MCF 10A (cell line): ENCODE measurements at regions of chr22 and their contacts with region 1.

Region 1: DNA sequence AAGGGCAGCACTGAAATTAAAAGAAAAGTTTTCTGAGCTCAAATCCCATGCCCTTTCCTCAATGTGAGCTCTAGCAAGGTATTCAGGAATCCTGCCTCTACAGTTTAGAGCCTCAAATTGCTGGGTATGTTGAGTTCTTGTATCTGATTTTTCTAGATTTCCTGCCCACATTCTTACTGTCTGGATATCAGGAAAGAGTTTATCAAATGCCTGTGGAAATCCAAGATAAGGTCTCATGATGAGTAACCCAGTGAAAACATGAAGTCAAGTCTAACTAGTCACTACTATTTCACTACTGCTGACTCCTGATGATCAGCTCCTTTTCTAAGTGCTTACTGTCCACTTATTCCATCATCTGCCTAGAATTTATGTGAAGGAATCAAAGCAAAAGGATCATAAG is 29.8 kb downstream of the LIMK2 start:
- DNase-seq: no peak
- H3K4me3 Mint-ChIP-seq: no peak overlapping the region
- H3K27ac Mint-ChIP-seq: no peak overlapping the region
- H3K4me1 Mint-ChIP-seq: peaks cover 18% of the 10 kb centered on the region
- H3K27me3 Mint-ChIP-seq: no peaks in the 10 kb centered on the region
- CTCF ChIP-seq: no peak

Region 2: GRCh38 chr22:31218565-31219262 is 23.2 kb before region 1 on chr22:
- CTCF ChIA-PET with region 1: interaction called, 4 read pairs
- POLR2A ChIA-PET with region 1: interaction called, 30 read pairs
- intact Hi-C with region 1: no loop called
- DNase-seq: peak; percentile 39
- H3K4me3 Mint-ChIP-seq: no peak overlapping the region
- H3K27ac Mint-ChIP-seq: peak overlapping the region; percentile 94
- H3K4me1 Mint-ChIP-seq: peaks cover 16% of the 10 kb centered on the region
- H3K27me3 Mint-ChIP-seq: no peaks in the 10 kb centered on the region
- CTCF ChIP-seq: no peak

Region 3: GRCh38 chr22:31223786-31224191 is 18.1 kb before region 1 on chr22:
- CTCF ChIA-PET with region 1: interaction called, 16 read pairs
- POLR2A ChIA-PET with region 1: interaction called, 30 read pairs
- intact Hi-C with region 1: no loop called
- DNase-seq: no peak
- H3K4me3 Mint-ChIP-seq: no peak overlapping the region
- H3K27ac Mint-ChIP-seq: no peak overlapping the region
- H3K4me1 Mint-ChIP-seq: peaks cover 4% of the 10 kb centered on the region
- H3K27me3 Mint-ChIP-seq: no peaks in the 10 kb centered on the region
- CTCF ChIP-seq: no peak

Region 4: GRCh38 chr22:31230871-31231621 is 10.9 kb before region 1 on chr22:
- CTCF ChIA-PET with region 1: interaction called, 39 read pairs
- POLR2A ChIA-PET with region 1: interaction called, 4 read pairs
- intact Hi-C with region 1: no loop called
- DNase-seq: peak; percentile 47
- H3K4me3 Mint-ChIP-seq: no peak overlapping the region
- H3K27ac Mint-ChIP-seq: peak overlapping the region; percentile 46
- H3K4me1 Mint-ChIP-seq: peaks cover 12% of the 10 kb centered on the region
- H3K27me3 Mint-ChIP-seq: no peaks in the 10 kb centered on the region
- CTCF ChIP-seq: peak; percentile 57

Region 5: DNA sequence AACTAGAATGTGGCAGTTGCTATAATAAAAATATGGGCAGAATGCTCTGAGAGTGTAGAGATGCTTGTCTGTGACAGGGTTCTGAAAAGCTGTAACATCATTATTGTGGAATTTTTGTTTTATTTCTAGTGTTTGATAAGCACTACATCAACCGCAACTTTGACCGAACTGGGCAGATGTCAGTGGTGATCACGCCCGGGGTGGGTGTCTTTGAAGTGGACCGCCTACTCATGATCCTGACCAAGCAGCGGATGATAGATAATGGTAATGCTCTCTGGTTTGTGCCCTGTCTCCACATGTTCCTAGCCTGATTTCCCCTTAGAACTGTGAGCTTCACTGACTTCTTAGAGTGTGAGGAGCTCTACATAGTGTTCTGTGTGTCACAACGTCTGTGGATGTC is 560.6 kb after region 1 on chr22:
- CTCF ChIA-PET with region 1: no interaction called
- POLR2A ChIA-PET with region 1: no interaction called
- intact Hi-C with region 1: no loop called
- DNase-seq: no peak
- H3K4me3 Mint-ChIP-seq: no peak overlapping the region
- H3K27ac Mint-ChIP-seq: no peak overlapping the region
- H3K4me1 Mint-ChIP-seq: no peaks in the 10 kb centered on the region
- H3K27me3 Mint-ChIP-seq: no peaks in the 10 kb centered on the region
- CTCF ChIP-seq: no peak